Right cardiac atrium (tissue), 5 donors: ENCODE measurements at regions of chr22 and their contacts with region 1.

Region 1: DNA sequence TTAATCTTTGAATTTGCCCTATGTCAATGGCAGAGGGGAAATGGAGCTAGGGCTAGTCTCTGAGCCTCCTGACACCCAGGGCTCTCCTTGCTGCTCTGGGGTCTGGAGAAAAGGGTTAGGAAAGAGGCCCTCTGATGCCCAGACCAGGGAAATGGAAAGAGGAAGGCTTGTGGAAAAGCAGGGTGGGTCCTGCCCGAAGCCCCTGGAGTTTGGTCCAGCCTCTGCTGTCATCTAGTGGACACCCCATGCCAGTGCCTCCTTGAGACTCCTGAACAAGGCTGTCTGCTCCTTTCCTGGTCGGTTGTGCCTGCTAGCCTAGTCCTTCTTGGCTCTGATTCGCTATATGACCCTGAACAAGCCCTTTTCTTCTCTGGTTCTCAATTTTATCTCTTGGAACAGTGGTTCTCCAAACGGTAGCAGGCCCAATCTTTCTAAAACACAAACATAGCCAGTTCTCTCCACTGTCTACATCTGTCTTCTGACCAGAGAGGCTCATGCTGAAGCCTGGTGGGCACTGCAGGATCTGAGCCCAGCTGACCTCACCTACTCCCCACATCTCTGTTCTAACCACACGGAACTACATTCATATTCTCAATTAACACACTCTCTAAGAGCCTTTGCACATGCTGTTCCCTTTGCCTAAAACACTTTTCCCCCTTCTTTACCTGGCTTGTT is 8.8 kb upstream of the PLA2G3 start:
- DNase-seq: peak; percentile 79 to 89 (median 88)
- ATAC-seq: peak; percentile 95 to 96
- H3K4me3 ChIP-seq: no peak overlapping the region
- H3K27ac ChIP-seq: peak overlapping the region; percentile 65
- H3K4me1 ChIP-seq: no peaks in the 10 kb centered on the region
- H3K27me3 ChIP-seq: no peaks in the 10 kb centered on the region

Region 2: DNA sequence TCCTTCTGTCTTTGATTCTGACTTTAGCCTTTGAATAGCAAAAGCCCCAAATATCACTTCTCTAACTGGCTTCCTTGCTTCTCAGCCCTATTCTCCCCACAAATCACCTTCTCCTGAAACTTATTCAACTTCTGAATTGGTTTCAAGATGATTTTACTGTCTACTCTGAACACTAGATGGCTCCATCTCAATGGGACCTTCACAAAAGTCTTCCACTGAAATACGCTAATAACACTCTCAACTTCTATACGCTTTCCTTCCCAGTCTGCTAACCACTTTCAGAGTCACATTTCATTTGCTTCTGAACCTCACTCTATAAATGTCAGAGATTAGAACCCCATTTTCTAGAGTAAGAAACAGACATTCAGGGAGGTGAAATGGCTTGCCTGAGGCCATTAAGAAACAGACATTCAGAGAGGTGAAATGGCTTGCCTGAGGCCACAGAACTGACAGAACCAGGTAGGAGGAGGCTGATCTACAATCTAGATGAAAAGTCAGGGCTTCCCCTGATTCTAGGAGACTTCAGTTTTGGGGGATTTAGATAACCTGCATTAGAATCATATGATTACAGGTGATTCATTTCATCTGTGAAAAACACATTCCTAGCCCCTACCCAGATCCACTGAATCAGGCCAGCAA is 201.2 kb before region 1 on chr22:
- intact Hi-C with region 1: loop called (anchors 5 to 10 kb)
- DNase-seq: no peak
- ATAC-seq: peak; percentile 66 to 70
- H3K4me3 ChIP-seq: no peak overlapping the region
- H3K27ac ChIP-seq: peak overlapping the region; percentile 89
- H3K4me1 ChIP-seq: peaks cover 11% of the 10 kb centered on the region
- H3K27me3 ChIP-seq: no peaks in the 10 kb centered on the region

Region 3: DNA sequence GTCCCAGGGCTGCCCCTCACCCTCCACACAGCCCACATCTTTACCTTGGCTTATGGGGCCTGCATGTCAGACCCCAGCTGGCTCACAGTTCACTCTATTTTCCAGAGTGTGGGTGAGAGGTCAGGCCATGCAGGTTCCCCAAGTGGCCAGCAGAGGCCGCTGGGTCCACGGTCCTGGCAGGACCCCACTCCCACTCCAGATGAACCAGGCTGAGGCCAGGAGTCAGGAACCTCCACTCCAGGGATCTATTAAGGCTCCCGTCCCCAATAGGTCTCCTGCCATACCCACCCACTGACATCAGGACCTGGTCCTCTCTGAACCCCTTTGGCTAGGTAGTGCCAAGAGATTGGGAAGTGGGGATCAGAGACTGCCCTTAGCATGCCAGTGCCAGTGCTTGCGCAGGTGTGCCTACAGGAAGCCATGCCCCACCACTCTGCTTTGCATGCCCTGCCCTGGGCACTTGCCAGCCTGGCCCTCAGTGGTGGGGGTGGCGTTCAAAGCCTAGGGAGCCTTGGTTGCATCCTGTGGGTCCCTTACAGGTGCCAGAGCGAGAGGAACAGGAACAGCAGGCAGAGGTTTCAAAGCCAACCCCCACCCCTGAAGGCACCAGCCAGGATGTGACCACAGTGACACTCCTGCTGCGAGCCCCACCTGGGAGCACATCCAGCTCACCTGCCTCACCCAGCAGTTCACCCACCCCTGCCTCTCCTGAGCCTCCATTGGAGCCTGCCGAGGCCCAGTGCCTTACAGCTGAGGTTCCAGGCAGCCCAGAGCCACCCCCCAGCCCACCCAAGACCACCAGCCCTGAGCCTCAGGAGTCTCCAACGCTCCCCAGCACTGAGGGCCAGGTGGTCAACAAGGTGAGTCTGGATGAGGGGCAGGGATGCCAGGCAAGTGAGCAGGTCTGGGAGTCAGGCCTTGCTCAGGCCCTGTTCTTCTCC is 59.7 kb before region 1 on chr22:
- intact Hi-C with region 1: loop called in 2 of 4 experiments (anchors 5 kb)
- DNase-seq: peak; percentile 42 to 84 (median 77)
- ATAC-seq: peak; percentile 4 to 5
- H3K4me3 ChIP-seq: no peak overlapping the region
- H3K27ac ChIP-seq: peak overlapping the region; percentile 13
- H3K4me1 ChIP-seq: no peaks in the 10 kb centered on the region
- H3K27me3 ChIP-seq: no peaks in the 10 kb centered on the region

Region 4: DNA sequence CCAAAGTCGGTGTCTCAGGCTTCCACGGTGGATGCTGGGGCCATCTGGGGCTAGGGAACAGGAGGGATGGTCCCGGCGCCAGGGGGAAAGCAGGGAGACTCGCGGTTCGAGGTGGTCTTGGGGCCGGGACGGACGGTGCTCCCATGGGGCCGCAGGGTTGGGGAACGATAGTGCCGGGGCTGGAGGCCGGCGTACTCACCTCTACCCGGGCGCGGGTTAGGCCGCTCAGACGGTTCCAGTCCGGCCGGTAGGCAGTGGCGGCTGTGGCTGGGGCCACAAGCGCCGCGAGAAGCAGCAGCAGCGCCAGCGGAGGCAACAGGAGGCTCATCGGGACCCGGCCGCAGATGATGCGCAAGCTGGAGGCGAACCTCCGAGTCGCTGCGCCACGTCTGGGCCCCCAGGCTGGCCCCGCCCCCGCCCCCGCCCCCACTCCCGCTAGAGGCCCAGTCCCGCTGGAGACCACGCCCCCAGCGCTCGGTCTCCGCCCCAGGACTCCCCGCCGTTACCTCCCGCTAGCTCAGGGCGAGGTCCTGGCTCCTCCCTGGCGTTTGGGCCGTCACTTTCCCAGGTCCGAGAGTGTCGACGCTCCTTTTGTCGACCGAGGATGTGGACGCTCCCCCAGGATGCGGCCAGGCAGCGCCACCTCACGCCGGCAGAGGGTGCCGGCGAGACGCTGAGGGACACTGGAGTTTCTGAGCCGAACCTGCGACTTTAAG is 41.8 kb before region 1 on chr22 and contains the start of gene SELENOM:
- intact Hi-C with region 1: loop called in 3 of 4 experiments (anchors 2 to 5 kb)
- DNase-seq: peak; percentile 98 to 99 (median 99)
- ATAC-seq: peak; percentile 94 to 95
- H3K4me3 ChIP-seq: peak within 1 kb of the TSS; percentile 52
- H3K27ac ChIP-seq: peak within 1 kb of the TSS; percentile 90
- H3K4me1 ChIP-seq: peaks cover 3% of the 10 kb centered on the region
- H3K27me3 ChIP-seq: no peaks in the 10 kb centered on the region
- total RNA-seq, gene SELENOM: 167 to 205 (median 176) TPM